ENCODE measurements at regions of chr9 and their contacts with region 1.

Region 1: GRCh38 chr9:121692606-121693387 is 41.4 kb downstream of the DAB2IP start:
- DNase-seq: peak; percentile 60
- ATAC-seq: peak; percentile 85
- H3K4me3 ChIP-seq: no peak overlapping the region
- H3K27ac ChIP-seq: no peak overlapping the region
- H3K4me1 ChIP-seq: no peaks in the 10 kb centered on the region; the same call in 1 of the 2 replicates
- H3K27me3 ChIP-seq: no peaks in the 10 kb centered on the region
- CTCF ChIP-seq: no peak

Region 2: DNA sequence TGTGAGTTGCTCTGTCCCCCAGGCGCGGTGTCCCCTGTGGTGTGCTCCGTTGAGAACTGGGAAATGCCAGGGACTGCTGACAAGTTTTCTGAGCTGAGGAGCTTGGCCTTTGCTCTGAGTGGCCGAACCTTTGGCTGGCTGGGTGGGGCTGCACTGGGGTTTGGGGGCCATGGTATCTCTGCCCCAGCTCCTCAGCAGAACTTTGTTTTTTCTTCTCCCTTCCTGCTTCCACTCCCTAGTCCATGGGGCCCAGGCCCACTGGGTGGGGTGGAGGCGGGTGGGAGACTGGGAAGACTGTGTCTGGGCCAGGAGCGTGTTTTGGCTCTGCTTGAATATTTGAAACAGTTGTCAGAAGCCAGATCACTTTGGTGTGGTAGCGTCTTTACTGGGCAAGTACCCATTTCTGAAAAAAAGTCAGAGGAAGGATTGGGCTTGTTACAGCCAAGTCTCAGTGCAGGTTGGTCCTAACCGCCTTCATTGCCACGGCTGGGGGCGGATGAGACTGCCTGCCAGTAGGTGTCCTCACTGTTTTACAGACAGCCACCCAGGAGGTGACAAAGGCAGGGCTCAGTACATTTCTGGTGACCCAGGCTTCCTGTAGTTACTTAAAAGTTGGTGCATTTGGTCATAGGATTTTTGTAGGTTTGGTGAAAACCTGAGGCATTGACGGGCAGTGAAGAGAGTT is 51.3 kb after region 1 on chr9:
- CTCF ChIA-PET with region 1: no interaction called
- POLR2A ChIA-PET with region 1: no interaction called
- intact Hi-C with region 1: loop called (anchors 5 kb)
- DNase-seq: peak; percentile 60
- ATAC-seq: peak; percentile 75
- H3K4me3 ChIP-seq: peak overlapping the region; percentile 64
- H3K27ac ChIP-seq: 0 out of 2 replicates have a peak overlapping the region, but pooled peaks have one; percentile 5
- H3K4me1 ChIP-seq: peaks cover 13% of the 10 kb centered on the region
- H3K27me3 ChIP-seq: no peaks in the 10 kb centered on the region
- CTCF ChIP-seq: peak; percentile 67

Region 3: DNA sequence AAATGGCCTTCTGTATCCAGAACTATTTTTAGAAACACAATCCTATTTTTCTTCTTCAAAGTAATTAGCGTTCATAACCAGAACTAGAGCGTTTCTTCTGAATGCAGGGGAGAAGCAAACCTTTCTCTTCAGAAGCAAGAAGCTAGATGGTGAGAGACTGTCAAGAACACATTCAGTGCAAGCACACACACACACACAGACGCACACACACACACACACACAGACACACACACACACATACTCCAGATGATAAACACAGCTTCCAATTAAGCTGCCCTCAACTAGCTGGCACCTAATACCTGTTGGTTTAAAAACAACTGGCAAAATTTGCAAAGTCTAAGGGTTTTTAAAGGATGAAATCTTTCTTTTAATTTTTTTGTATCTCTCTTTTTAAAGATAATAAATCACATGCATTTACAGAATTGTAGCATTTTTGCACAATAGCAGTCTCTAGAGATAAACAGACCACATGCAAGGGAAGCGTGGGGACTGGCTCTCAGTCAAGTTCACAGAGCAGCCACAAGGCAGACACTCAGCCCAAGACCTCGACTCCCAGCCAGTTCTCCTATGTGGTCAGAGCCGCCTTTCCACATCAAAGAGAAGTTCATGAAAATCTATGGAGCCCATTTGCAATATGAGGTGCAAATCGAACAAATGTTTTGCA is 261.8 kb after region 1 on chr9:
- CTCF ChIA-PET with region 1: no interaction called
- POLR2A ChIA-PET with region 1: no interaction called
- intact Hi-C with region 1: no loop called
- DNase-seq: no peak
- ATAC-seq: no peak
- H3K4me3 ChIP-seq: no peak overlapping the region
- H3K27ac ChIP-seq: no peak overlapping the region
- H3K4me1 ChIP-seq: peaks cover 39% of the 10 kb centered on the region
- H3K27me3 ChIP-seq: no peaks in the 10 kb centered on the region
- CTCF ChIP-seq: no peak

Measured in PC-3 (cell line).